ENCODE measurements at regions of chr22 and their contacts with region 1.

Region 1: DNA sequence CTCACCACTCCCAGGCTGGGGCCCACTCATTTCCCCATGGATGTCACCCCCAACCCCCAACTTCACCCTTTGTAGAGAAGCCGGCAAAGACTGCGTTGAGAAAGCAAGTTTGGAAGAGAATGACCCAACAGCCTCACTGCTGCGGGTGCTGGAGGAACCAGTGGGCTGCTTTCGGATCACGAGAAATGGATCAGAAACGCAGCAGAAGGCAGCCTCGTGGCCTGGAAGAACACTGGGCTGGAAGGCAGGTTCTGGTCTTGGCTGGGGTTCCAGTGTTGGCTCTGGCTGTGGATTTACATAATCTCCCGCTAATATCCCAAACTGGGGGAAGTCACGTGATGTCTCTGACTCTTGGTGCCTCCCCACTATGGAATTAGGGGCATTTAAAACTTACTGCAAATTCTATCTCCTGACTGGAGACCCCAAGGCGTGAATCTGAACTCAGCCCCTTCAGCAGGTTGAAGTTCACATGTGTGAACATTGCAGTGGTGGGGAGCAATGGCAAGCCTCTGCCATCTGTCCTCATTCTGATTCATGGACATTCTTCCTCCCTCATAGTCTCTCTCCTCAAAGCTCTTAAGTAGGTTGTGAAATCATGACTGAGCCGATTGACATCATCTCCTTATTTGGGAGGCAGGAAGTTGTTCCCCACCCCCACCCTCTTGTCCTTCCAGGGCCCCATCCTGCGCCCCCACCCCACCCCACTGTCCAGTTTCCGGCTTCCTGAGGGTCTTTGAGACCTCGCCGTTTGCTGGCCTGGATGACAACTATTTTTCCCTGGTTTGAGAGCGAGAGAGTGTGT is 37.0 kb upstream of the TIMP3 start:
- DNase-seq: peak; percentile 61

Region 2: GRCh38 chr22:32622004-32622743 is 142.4 kb before region 1 on chr22:
- intact Hi-C with region 1: loop called (anchors 10 kb)
- DNase-seq: no peak

Measured in cardiac septum (tissue), 1 donor.